Prostate gland (tissue), 2 donors: ENCODE measurements at regions of chr11 and their contacts with region 1.

Region 1: DNA sequence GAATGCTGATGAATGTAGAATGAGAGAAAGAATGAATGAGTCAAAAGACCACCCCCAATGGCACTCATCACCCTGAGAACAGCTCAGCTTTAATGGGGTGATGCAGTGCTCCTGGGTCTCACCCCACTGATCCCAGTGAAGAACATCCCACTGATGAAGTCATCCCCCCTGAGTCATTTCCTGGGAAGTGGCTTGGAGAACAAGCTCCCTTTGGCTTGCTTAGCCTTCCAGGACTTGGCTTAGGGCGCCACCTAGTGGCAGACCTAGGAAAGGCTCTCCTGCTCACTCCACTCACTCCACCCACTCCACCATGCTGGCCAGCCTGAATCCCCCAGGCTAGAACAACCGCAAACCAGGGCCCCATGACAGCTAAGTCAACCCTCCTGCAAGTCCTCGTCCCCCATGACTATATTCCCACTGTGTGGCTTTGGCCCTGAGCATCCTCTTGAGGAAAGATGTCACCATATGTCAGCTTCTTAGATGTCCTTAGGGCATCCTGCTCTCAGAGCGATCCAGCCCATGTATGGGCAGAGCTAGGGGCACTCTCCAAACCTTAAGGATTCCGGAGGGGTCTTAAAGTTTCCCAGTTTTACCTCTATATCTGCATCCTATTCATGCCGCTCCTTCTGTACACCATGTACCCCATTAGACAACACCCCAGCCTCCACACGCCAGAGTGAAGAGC is 17.8 kb upstream of the TMPRSS13 start:
- DNase-seq: peak; percentile 79
- H3K4me3 ChIP-seq: no peak overlapping the region
- H3K27ac ChIP-seq: no peak overlapping the region
- H3K4me1 ChIP-seq: no peaks in the 10 kb centered on the region
- H3K27me3 ChIP-seq: no peaks in the 10 kb centered on the region
- CTCF ChIP-seq: peak; percentile 93 to 98 (median 96)
- POLR2A ChIP-seq: no peak

Region 2: GRCh38 chr11:117807482-117808327 is 139.3 kb before region 1 on chr11:
- intact Hi-C with region 1: loop called (anchors 5 kb)
- DNase-seq: peak; percentile 48
- H3K4me3 ChIP-seq: no peak overlapping the region
- H3K27ac ChIP-seq: no peak overlapping the region
- H3K4me1 ChIP-seq: no peaks in the 10 kb centered on the region
- H3K27me3 ChIP-seq: no peaks in the 10 kb centered on the region
- CTCF ChIP-seq: peak; percentile 80 to 87 (median 86)
- POLR2A ChIP-seq: no peak

Region 3: GRCh38 chr11:117817368-117818040 is 129.5 kb before region 1 on chr11:
- intact Hi-C with region 1: loop called (anchors 5 kb)
- DNase-seq: peak; percentile 57
- H3K4me3 ChIP-seq: no peak overlapping the region
- H3K27ac ChIP-seq: peak overlapping the region in 1 of 2 donors; percentile 13
- H3K4me1 ChIP-seq: peaks cover 5% of the 10 kb centered on the region
- H3K27me3 ChIP-seq: no peaks in the 10 kb centered on the region
- CTCF ChIP-seq: peak; percentile 97 to 99 (median 98)
- POLR2A ChIP-seq: no peak

Region 4: GRCh38 chr11:117843666-117844484 is 103.1 kb before region 1 on chr11:
- intact Hi-C with region 1: loop called (anchors 1 kb)
- DNase-seq: peak; percentile 68
- H3K4me3 ChIP-seq: no peak overlapping the region
- H3K27ac ChIP-seq: no peak overlapping the region
- H3K4me1 ChIP-seq: no peaks in the 10 kb centered on the region
- H3K27me3 ChIP-seq: no peaks in the 10 kb centered on the region
- CTCF ChIP-seq: peak; percentile 95 to 99 (median 98)
- POLR2A ChIP-seq: no peak

Region 5: DNA sequence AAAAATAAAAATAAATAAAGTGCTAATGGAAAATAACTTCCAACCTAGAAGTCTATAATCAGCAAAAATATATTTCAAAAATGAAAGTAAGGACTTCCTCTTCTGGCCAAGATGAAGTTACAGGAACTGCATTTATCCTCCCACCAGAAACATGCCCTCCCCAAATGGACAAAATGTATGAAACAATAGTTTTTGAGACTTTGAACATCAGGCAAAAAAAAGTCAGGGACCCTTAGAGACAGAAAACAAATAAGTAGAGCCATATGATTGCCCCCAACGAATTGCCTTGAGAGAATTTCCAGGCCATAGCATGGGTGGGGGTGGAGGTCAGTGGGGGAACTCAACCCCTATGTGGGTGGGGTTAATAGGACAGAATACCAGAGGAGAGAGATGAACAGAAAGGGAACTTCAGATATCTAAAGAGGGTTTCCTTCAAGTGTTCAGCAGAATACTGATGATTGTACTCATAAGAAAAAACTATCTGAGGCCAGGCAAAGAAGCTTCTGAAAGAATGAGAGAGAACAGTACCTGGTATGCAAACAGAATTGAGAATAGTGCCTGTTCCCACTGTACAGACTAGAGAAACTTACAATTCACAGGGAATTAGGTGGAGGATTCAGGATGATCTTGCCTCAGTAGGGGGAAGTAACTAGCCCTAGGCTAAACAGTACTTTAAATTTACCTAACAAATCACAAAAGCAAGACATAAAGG is 12.6 kb after region 1 on chr11:
- intact Hi-C with region 1: no loop called
- DNase-seq: no peak
- H3K4me3 ChIP-seq: no peak overlapping the region
- H3K27ac ChIP-seq: no peak overlapping the region
- H3K4me1 ChIP-seq: no peaks in the 10 kb centered on the region
- H3K27me3 ChIP-seq: no peaks in the 10 kb centered on the region
- CTCF ChIP-seq: no peak
- POLR2A ChIP-seq: no peak

Region 6: GRCh38 chr11:118051611-118052461 is 104.9 kb after region 1 on chr11:
- intact Hi-C with region 1: loop called (anchors 5 kb)
- DNase-seq: no peak
- H3K4me3 ChIP-seq: no peak overlapping the region
- H3K27ac ChIP-seq: no peak overlapping the region
- H3K4me1 ChIP-seq: no peaks in the 10 kb centered on the region
- H3K27me3 ChIP-seq: no peaks in the 10 kb centered on the region
- CTCF ChIP-seq: no peak
- POLR2A ChIP-seq: no peak